ENCODE measurements at regions of chr3 and their contacts with region 1.

Region 1: GRCh38 chr3:5731094-5731493 is 543.6 kb downstream of the EDEM1 start:
- DNase-seq: no peak
- H3K4me3 ChIP-seq: no peak overlapping the region
- H3K27ac ChIP-seq: no peak overlapping the region
- H3K4me1 ChIP-seq: no peaks in the 10 kb centered on the region
- H3K27me3 ChIP-seq: no peaks in the 10 kb centered on the region
- CTCF ChIP-seq: peak in 2 of 3 experiments; percentile 52 to 68; a peak in 3 of 4 replicates
- EP300 ChIP-seq: no peak
- POLR2A ChIP-seq: no peak
- RAD21 ChIP-seq: peak; percentile 77 to 79

Region 2: GRCh38 chr3:5426094-5426883 is 304.8 kb before region 1 on chr3:
- CTCF ChIA-PET with region 1: interaction called, 30 read pairs
- POLR2A ChIA-PET with region 1: no interaction called
- DNase-seq: peak; percentile 73 to 95
- H3K4me3 ChIP-seq: no peak overlapping the region
- H3K27ac ChIP-seq: no peak overlapping the region
- H3K4me1 ChIP-seq: peaks cover 0 to 2% (median 0%) of the 10 kb centered on the region in 4 experiments; a peak in 2 of 7 replicates
- H3K27me3 ChIP-seq: no peaks in the 10 kb centered on the region
- CTCF ChIP-seq: peak; percentile 82 to 98 (median 97)
- EP300 ChIP-seq: no peak
- POLR2A ChIP-seq: no peak
- RAD21 ChIP-seq: peak; percentile 91 to 96

Region 3: GRCh38 chr3:5717254-5717653 is 13.8 kb before region 1 on chr3:
- CTCF ChIA-PET with region 1: interaction called, 10 read pairs
- POLR2A ChIA-PET with region 1: no interaction called
- DNase-seq: no peak
- H3K4me3 ChIP-seq: no peak overlapping the region
- H3K27ac ChIP-seq: no peak overlapping the region
- H3K4me1 ChIP-seq: no peaks in the 10 kb centered on the region; a peak in 1 of 7 replicates
- H3K27me3 ChIP-seq: no peaks in the 10 kb centered on the region
- CTCF ChIP-seq: no peak
- EP300 ChIP-seq: no peak
- POLR2A ChIP-seq: no peak
- RAD21 ChIP-seq: no peak